CD4-positive, alpha-beta T cell (primary cell): ENCODE measurements at regions of chr17 and their contacts with region 1.

Region 1: DNA sequence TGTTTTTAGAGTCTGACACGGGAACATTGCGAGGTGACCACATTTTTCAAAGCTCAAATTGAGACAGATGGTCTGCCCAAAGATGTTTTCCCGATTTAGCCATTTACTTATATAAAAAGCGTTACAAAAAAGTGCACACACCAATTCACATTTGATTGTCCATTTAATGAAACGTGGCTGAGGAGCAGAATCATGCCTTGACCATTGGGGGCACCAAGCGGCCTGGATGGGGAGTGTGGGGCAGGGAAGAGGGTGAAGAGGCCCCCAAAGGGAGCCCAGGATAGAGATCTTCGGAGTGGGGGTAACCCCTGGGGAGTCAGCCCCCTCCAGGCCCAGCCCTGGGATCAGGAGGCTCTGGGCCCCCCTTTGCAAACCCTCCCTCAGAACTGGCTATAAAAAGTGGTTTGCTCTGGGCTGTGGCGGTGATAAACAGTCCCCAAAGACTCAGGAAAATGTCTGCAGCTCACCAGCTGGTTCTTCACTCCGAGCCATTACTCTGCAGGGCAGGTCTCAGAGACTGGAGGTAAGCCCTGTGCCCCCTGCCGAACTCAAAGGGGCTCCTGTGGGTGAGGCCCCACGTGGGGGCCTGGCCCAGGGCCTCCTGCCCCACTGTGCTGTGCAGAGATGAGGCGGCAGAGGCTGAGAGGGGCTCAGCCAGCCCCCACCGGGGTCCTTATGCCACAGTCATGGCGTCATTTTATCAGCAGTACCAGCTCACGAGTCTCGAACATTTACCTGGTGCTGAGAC is 105.9 kb upstream of the SEC14L1 start:
- DNase-seq: no peak
- ATAC-seq: no peak
- H3K4me3 ChIP-seq: no peak overlapping the region
- H3K4me3 Mint-ChIP-seq: no peak overlapping the region
- H3K27ac ChIP-seq: no peak overlapping the region
- H3K27ac Mint-ChIP-seq: no peak overlapping the region
- H3K4me1 ChIP-seq: no peaks in the 10 kb centered on the region
- H3K4me1 Mint-ChIP-seq: no peaks in the 10 kb centered on the region
- H3K27me3 ChIP-seq: peaks cover 3 to 12% of the 10 kb centered on the region in 2 experiments
- H3K27me3 Mint-ChIP-seq: peaks cover 12% of the 10 kb centered on the region
- CTCF ChIP-seq: no peak

Region 2: GRCh38 chr17:76957678-76958464 is 77.0 kb before region 1 on chr17:
- CTCF ChIA-PET with region 1: no interaction called
- POLR2A ChIA-PET with region 1: no interaction called
- intact Hi-C with region 1: loop called in 1 of 2 experiments (anchors 5 kb)
- DNase-seq: no peak
- ATAC-seq: no peak
- H3K4me3 ChIP-seq: no peak overlapping the region
- H3K4me3 Mint-ChIP-seq: no peak overlapping the region
- H3K27ac ChIP-seq: no peak overlapping the region
- H3K27ac Mint-ChIP-seq: no peak overlapping the region
- H3K4me1 ChIP-seq: no peaks in the 10 kb centered on the region
- H3K4me1 Mint-ChIP-seq: no peaks in the 10 kb centered on the region
- H3K27me3 ChIP-seq: no peaks in the 10 kb centered on the region
- H3K27me3 Mint-ChIP-seq: no peaks in the 10 kb centered on the region
- CTCF ChIP-seq: no peak